ENCODE measurements at regions of chr5 and their contacts with region 1.

Region 1: GRCh38 chr5:42994246-42995151 is 45.6 kb downstream of the ANXA2R start:
- DNase-seq: peak; percentile 74 to 91 (median 84)
- H3K4me3 ChIP-seq: peak overlapping the region; percentile 97
- H3K4me3 Mint-ChIP-seq: peak overlapping the region; percentile 94 to 100 (median 99)
- H3K27ac ChIP-seq: peak overlapping the region; percentile 97
- H3K27ac Mint-ChIP-seq: peak overlapping the region; percentile 97 to 100 (median 100)
- H3K4me1 ChIP-seq: peaks cover 29% of the 10 kb centered on the region
- H3K4me1 Mint-ChIP-seq: peaks cover 31 to 35% (median 35%) of the 10 kb centered on the region in 3 donors
- H3K27me3 ChIP-seq: no peaks in the 10 kb centered on the region
- H3K27me3 Mint-ChIP-seq: peaks cover 0 to 13% of the 10 kb centered on the region in 2 donors

Region 2: GRCh38 chr5:43019614-43020293 is 25.3 kb after region 1 on chr5:
- CTCF ChIA-PET with region 1: interaction called, 201 read pairs
- POLR2A ChIA-PET with region 1: interaction called, 347 read pairs
- DNase-seq: peak; percentile 75 to 93 (median 87)
- H3K4me3 ChIP-seq: peak overlapping the region; percentile 87
- H3K4me3 Mint-ChIP-seq: peak overlapping the region; percentile 97 to 100 (median 99)
- H3K27ac ChIP-seq: peak overlapping the region; percentile 96
- H3K27ac Mint-ChIP-seq: peak overlapping the region; percentile 98 to 100 (median 100)
- H3K4me1 ChIP-seq: peaks cover 36% of the 10 kb centered on the region
- H3K4me1 Mint-ChIP-seq: peaks cover 40 to 56% (median 54%) of the 10 kb centered on the region in 3 donors
- H3K27me3 ChIP-seq: no peaks in the 10 kb centered on the region
- H3K27me3 Mint-ChIP-seq: peaks cover 0 to 8% of the 10 kb centered on the region in 2 donors

Region 3: DNA sequence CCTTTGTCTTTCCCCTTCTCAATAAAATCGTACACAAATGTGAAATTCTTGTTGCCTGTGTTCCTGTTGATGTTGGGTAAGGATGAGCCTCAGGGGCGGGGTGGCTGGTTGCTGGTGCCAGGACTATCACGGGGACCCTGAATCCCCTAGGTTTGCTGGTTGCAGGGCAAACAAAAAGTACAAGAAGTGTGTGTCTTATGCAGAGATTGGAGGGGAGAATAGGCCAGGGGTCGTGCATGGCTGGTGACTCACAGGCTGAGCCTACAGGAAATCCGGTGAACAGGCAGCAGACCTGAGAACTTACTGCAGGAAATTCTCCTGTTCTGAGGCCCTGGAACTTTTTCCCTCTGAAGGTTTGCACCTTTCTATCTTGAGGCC is 40.1 kb after region 1 on chr5:
- CTCF ChIA-PET with region 1: interaction called, 245 read pairs
- POLR2A ChIA-PET with region 1: interaction called, 323 read pairs
- DNase-seq: peak in 2 of 5 donors; percentile 26 to 31
- H3K4me3 ChIP-seq: no peak overlapping the region
- H3K4me3 Mint-ChIP-seq: peak overlapping the region in 6 of 7 donors; percentile 12 to 76 (median 57)
- H3K27ac ChIP-seq: no peak overlapping the region
- H3K27ac Mint-ChIP-seq: peak overlapping the region; percentile 68 to 97 (median 88)
- H3K4me1 ChIP-seq: peaks cover 35% of the 10 kb centered on the region
- H3K4me1 Mint-ChIP-seq: peaks cover 41 to 62% (median 43%) of the 10 kb centered on the region in 3 donors
- H3K27me3 ChIP-seq: no peaks in the 10 kb centered on the region
- H3K27me3 Mint-ChIP-seq: no peaks in the 10 kb centered on the region

Measured in CD8-positive, alpha-beta memory T cell (primary cell).